Activated B cell treated with CpG ODN at 0.5 μM for 24 hours (primary cell): ENCODE measurements at regions of chr13 and their contacts with region 1.

Region 1: DNA sequence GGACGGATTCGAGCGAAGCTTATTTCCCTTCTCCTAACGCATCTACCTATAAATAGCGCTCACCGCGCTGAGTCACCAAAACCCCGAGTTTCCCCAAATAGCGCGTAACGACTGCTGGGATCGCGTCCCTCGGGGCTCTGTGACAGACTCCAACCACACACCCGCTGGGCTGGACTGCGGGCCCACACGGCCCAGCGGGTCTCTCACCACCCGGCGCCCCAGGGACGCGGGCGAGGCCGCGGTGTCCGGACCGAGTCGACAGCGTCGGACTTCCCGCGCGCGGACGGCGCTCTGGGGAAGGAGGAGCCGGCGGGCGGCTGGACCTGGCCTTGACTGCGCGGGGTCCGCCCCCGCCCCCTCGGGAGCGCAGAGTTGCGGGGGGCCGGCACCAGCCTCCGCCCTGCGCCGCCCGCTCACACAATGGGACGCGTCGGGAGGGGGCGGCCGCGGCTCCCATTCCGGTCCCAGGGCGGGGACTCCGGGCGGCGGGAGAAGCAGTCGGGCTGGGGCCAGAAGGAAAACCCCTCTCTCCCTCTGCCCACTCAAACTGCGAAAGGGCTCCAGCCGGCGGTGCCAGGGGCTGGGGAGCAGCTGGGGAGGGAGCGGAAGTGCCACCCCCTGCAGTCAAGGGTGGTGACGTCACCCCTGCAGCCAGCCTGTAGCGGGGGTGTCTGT is 108.8 kb downstream of the KCNRG start:
- DNase-seq: peak; percentile 86
- ATAC-seq: peak; percentile 59
- H3K4me3 Mint-ChIP-seq: peak overlapping the region; percentile 87
- H3K27ac Mint-ChIP-seq: peak overlapping the region; percentile 95
- H3K4me1 Mint-ChIP-seq: peaks cover 64% of the 10 kb centered on the region
- H3K27me3 Mint-ChIP-seq: peaks cover 2% of the 10 kb centered on the region
- CTCF ChIP-seq: no peak

Region 2: DNA sequence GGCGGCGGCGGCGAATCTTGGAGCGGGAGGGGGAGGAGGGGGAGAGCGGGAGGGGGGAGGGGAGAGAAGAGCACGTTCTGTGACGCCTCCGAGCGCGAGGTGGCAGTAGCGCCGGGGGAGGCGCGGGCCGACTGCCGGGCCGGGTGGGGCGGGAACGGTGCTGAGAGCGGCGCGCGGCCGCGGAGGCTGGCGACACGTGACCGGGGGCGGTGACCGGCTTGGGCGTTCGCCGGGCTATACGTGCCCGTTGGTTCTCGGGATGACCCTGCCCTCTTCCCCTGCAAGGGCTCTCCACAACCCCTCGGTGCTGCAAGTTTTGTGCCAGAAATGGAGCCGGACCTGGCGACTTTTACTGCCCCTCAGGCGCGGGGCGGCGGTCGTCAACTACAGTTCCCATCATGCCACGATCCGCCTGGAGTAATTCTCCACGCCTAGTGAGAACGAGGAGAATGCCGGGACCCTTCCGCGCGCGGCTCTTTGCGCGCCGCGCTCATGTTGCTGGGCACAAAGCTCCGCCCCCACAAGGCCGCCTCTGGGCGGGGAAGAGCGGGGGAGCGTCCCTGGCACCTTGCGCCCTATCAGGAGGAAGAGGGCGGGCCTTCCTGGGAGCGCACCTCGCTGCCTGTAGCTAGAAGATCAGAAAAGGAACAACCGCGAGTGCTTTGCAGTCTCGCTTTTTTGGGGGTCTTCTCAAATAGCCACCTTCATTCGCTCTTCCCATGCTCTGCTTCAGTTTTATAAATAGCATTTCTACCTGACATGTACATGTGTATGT is 331.3 kb before region 1 on chr13 and contains the start of gene KPNA3:
- CTCF ChIA-PET with region 1: no interaction called
- POLR2A ChIA-PET with region 1: interaction called, 13 read pairs
- intact Hi-C with region 1: loop called (anchors 2 kb)
- DNase-seq: peak; percentile 88
- ATAC-seq: peak; percentile 89
- H3K4me3 Mint-ChIP-seq: peak within 1 kb of the TSS; percentile 97
- H3K27ac Mint-ChIP-seq: peak within 1 kb of the TSS; percentile 97
- H3K4me1 Mint-ChIP-seq: peaks cover 31% of the 10 kb centered on the region
- H3K27me3 Mint-ChIP-seq: no peaks in the 10 kb centered on the region
- CTCF ChIP-seq: no peak
- total RNA-seq, gene KPNA3: 28.6 and 28.7 TPM in 2 replicates

Region 3: DNA sequence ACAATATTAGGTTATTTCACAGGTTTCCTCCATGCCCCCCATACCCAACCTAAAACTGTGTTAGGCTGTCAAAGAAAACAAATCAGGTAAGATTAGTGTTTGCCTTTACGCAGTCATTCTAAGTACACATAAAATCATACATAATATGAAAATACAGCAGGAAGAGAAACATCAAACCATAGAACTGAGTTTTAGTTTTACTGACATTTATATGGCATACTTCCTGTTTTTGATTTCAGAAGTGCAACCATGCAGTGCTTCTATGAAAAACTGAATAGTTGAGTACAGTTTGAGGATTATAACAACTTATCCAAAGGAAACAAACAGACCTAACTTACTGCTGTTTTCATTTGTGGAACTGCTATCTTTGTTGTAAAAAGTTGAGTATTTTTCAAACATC is 17.4 kb before region 1 on chr13:
- CTCF ChIA-PET with region 1: interaction called, 6 read pairs
- POLR2A ChIA-PET with region 1: interaction called, 134 read pairs
- intact Hi-C with region 1: loop called (anchors 1 kb)
- DNase-seq: no peak
- ATAC-seq: peak; percentile 85
- H3K4me3 Mint-ChIP-seq: peak overlapping the region; percentile 67
- H3K27ac Mint-ChIP-seq: peak overlapping the region; percentile 94
- H3K4me1 Mint-ChIP-seq: peaks cover 75% of the 10 kb centered on the region
- H3K27me3 Mint-ChIP-seq: no peaks in the 10 kb centered on the region
- CTCF ChIP-seq: no peak

Region 4: DNA sequence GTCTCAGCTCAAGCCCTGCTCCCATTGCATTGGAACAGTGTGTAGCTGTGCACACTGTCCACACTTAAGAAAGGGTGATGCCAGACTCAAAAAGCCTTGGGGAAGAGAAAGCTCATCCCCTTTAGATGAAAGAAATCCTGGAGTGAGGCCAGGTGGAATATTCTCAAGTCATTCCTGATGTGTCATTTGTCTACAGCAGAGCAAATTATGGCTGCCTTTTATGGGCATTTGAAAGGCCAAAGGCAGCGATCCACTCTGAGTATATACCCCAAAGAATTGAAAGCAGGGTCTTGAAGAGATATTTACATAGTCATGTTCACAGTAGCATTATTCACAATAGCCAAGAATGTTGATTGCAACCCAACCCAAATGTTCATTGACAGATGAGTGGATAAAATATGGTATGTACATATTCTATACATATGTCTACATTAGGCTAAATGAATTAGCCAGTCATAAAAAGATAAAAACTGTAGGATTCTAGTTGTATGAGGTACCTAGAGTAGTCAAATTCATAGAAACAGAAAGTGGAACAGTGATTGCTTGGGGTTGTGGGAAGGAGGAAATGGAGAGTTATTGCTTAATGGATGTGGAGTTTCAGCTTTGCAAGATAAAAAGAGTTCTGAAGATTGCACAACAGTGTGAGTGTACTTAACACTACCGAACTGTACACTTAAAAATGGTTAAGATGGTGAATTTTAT is 106.1 kb after region 1 on chr13:
- CTCF ChIA-PET with region 1: no interaction called
- POLR2A ChIA-PET with region 1: interaction called, 242 read pairs
- intact Hi-C with region 1: no loop called
- DNase-seq: no peak
- ATAC-seq: peak; percentile 49
- H3K4me3 Mint-ChIP-seq: no peak overlapping the region
- H3K27ac Mint-ChIP-seq: peak overlapping the region; percentile 1
- H3K4me1 Mint-ChIP-seq: peaks cover 40% of the 10 kb centered on the region
- H3K27me3 Mint-ChIP-seq: no peaks in the 10 kb centered on the region
- CTCF ChIP-seq: no peak

Region 5: GRCh38 chr13:50387051-50387581 is 263.1 kb after region 1 on chr13:
- CTCF ChIA-PET with region 1: interaction called, 4 read pairs
- POLR2A ChIA-PET with region 1: interaction called, 29 read pairs
- intact Hi-C with region 1: no loop called
- DNase-seq: peak; percentile 28
- ATAC-seq: peak; percentile 81
- H3K4me3 Mint-ChIP-seq: no peak overlapping the region
- H3K27ac Mint-ChIP-seq: no peak overlapping the region
- H3K4me1 Mint-ChIP-seq: peaks cover 4% of the 10 kb centered on the region
- H3K27me3 Mint-ChIP-seq: no peaks in the 10 kb centered on the region
- CTCF ChIP-seq: no peak

Region 6: GRCh38 chr13:50783717-50784290 is 659.8 kb after region 1 on chr13:
- CTCF ChIA-PET with region 1: no interaction called
- POLR2A ChIA-PET with region 1: interaction called, 12 read pairs
- intact Hi-C with region 1: no loop called
- DNase-seq: no peak
- ATAC-seq: no peak
- H3K4me3 Mint-ChIP-seq: peak overlapping the region; percentile 5
- H3K27ac Mint-ChIP-seq: no peak overlapping the region
- H3K4me1 Mint-ChIP-seq: peaks cover 24% of the 10 kb centered on the region
- H3K27me3 Mint-ChIP-seq: no peaks in the 10 kb centered on the region
- CTCF ChIP-seq: no peak